AG04450 (cell line): ENCODE measurements at regions of chr9 and their contacts with region 1.

Region 1: GRCh38 chr9:122350638-122351355 is 20.0 kb upstream of the PTGS1 start:
- DNase-seq: peak; percentile 44
- H3K4me3 ChIP-seq: no peak overlapping the region
- H3K27ac ChIP-seq: no peak overlapping the region
- H3K27me3 ChIP-seq: peaks cover 3% of the 10 kb centered on the region
- CTCF ChIP-seq: peak; percentile 98

Region 2: GRCh38 chr9:122099271-122099869 is 251.4 kb before region 1 on chr9:
- CTCF ChIA-PET with region 1: interaction called, 95 read pairs
- POLR2A ChIA-PET with region 1: no interaction called
- DNase-seq: peak; percentile 32
- H3K4me3 ChIP-seq: no peak overlapping the region
- H3K27ac ChIP-seq: no peak overlapping the region
- H3K27me3 ChIP-seq: peaks cover 2% of the 10 kb centered on the region
- CTCF ChIP-seq: peak; percentile 84

Region 3: DNA sequence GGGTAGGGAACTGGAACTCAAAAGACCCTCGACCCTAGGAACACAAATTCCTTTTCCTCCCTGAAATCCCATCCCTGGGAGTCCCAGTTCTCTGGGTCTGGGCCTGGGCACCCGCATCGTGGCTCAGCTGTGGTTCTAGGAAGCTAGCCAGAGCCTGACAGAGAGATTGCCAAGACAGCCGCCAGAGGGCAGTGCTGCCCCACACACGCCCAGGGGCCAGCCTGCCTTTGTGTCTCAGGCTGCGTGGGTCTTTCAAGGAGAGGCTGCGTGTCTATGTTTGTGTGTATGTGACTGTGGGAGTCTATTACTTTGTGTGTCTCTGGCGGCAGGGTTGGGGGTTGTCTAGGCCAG is 225.7 kb before region 1 on chr9:
- CTCF ChIA-PET with region 1: interaction called, 222 read pairs
- POLR2A ChIA-PET with region 1: interaction called, 13 read pairs
- DNase-seq: peak; percentile 47
- H3K4me3 ChIP-seq: no peak overlapping the region
- H3K27ac ChIP-seq: no peak overlapping the region
- H3K27me3 ChIP-seq: peaks cover 2% of the 10 kb centered on the region
- CTCF ChIP-seq: peak; percentile 97

Region 4: DNA sequence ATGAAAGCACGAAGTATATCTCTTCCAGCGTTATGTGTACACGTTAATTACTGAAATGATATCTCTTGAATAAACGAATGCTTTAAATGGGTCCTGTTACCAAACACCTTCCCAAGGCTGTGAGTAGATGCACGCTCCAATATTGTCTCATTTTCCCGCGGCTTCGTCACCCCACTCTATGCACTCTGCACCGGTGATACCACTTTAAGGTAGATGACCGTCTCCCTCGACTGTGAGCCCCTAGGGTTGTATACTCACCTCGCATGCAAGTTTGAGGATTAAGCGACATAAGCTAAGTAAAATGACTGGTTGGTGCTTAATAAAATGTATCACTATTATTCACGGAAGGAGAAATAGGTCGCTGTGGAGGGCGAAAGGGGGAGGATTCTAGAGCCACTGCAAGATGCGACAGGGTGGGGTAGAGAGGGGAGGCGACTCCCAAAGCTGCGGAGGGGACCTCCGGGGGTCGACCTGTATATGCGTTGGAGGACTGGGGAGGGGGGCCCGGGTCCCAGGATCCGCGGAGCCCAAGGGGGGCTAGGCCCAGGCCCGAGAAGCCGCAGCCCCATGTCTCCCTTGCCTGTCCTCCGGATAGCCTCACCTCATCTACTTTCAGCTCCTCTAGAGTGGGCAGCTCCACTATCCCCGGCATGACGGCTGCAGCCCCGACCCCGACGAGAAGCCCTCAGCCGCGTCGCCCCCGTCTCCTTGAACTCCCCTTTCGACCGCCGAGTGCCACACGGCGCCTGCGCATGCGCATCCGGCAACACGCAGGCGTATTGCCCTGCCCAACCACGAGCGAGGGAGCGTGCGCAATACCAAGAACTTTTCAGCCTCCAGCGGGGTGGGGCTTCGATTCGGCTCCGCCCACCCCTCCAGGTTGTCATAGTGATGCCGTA is 191.5 kb before region 1 on chr9 and contains the starts of genes MORN5 and NDUFA8:
- CTCF ChIA-PET with region 1: interaction called, 10 read pairs
- POLR2A ChIA-PET with region 1: no interaction called
- DNase-seq: peak; percentile 92
- H3K4me3 ChIP-seq: peak within 1 kb of the TSS; percentile 99
- H3K27ac ChIP-seq: peak within 1 kb of the TSS; percentile 24
- H3K27me3 ChIP-seq: peaks cover 19% of the 10 kb centered on the region
- CTCF ChIP-seq: 0 out of 2 replicates have a peak, but pooled peaks have one; percentile 6
- polyA plus RNA-seq, gene MORN5: not detected in 2 replicates
- polyA plus RNA-seq, gene NDUFA8: 80.2 and 90.4 TPM in 2 replicates

Region 5: DNA sequence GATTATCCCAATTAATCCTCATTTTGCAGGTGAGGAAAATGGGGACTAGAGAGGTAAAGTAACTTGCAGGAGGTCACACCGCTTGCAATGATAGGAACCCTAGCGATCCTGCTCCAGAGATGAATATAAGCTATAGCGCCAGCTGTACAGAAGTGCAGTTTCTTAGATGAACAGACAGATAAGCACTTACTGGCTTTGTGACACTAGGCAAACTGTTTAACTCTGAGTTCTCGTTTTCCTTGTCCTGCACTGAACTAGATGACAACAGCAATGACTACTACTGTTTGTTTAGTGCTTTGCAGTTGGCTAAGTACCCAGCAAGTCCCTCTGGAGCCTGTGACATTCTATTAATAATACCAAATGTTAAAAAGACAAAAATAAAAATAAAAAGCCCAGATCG is 133.1 kb before region 1 on chr9:
- CTCF ChIA-PET with region 1: no interaction called
- POLR2A ChIA-PET with region 1: no interaction called
- DNase-seq: no peak
- H3K4me3 ChIP-seq: no peak overlapping the region
- H3K27ac ChIP-seq: no peak overlapping the region
- H3K27me3 ChIP-seq: peaks cover 93% of the 10 kb centered on the region
- CTCF ChIP-seq: no peak

Region 6: DNA sequence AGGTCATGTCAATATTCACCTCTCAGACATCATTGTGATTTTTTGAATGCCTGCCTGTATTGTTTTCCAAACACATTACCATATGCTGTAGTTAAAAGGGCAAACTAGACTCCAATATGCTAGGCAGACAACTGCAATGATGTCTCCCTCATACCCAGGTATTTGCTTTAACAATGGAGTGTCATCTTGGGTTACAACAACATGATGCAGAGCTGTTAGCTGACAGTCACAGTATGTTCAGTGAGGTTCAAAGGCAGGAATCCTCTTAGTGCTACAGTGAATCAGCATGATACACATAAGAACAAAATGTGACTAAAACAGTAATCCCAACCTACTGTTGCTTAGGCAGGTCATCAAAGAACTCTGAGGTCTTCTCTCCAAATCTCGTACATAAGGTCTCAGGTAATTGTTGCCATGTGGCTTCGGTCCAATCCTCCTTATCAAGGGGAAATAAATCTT is 102.9 kb after region 1 on chr9:
- CTCF ChIA-PET with region 1: interaction called, 18 read pairs
- POLR2A ChIA-PET with region 1: no interaction called
- DNase-seq: no peak
- H3K4me3 ChIP-seq: no peak overlapping the region
- H3K27ac ChIP-seq: no peak overlapping the region
- H3K27me3 ChIP-seq: no peaks in the 10 kb centered on the region
- CTCF ChIP-seq: no peak

Region 7: GRCh38 chr9:123851851-123852250 is 1501.1 kb after region 1 on chr9:
- CTCF ChIA-PET with region 1: no interaction called
- POLR2A ChIA-PET with region 1: no interaction called
- DNase-seq: no peak
- H3K4me3 ChIP-seq: no peak overlapping the region
- H3K27ac ChIP-seq: no peak overlapping the region
- H3K27me3 ChIP-seq: no peaks in the 10 kb centered on the region
- CTCF ChIP-seq: no peak